IMR-90 (cell line): ENCODE measurements at regions of chr5 and their contacts with region 1.

Region 1: DNA sequence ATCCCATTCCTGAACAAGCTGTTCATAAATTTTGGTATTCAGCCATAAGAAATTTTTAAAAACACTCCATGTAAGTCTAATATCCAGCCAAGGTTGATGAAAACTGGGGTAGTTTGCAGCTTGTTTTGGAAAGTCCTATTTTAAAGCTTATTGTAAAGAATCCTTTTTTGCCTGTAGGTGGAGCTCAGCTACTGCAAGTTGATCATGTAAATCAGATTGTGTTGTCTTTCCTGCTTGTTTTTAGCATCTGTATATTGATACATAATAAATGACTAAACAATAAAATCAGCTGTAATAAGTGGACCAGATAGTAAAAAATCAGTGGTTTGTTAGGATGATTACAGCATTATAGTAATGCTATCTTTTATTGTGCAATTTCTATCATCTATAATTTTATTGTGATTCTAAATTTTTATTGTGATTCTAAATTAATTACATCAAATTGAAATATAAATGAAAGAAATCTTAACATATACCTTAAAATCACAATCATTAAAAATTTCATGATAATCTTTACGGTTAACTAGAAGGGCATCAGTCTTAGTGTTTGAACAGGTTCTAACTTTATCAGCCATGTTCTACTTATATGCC is 42.4 kb downstream of the CWC27 start:
- DNase-seq: peak; percentile 81
- ATAC-seq: peak; percentile 77
- H3K4me3 ChIP-seq: no peak overlapping the region
- H3K27ac ChIP-seq: no peak overlapping the region
- H3K4me1 ChIP-seq: no peaks in the 10 kb centered on the region
- H3K27me3 ChIP-seq: no peaks in the 10 kb centered on the region
- CTCF ChIP-seq: peak; percentile 81
- POLR2A ChIP-seq: 0 out of 2 replicates have a peak, but pooled peaks have one; percentile 30
- RAD21 ChIP-seq: peak; percentile 89

Region 2: GRCh38 chr5:64229163-64229774 is 581.9 kb before region 1 on chr5:
- CTCF ChIA-PET with region 1: no interaction called
- POLR2A ChIA-PET with region 1: no interaction called
- dilution Hi-C with region 1: no loop called
- in situ Hi-C with region 1: no loop called
- intact Hi-C with region 1: no loop called
- DNase-seq: peak; percentile 39
- ATAC-seq: peak; percentile 48; the same call in 1 of the 2 replicates
- H3K4me3 ChIP-seq: no peak overlapping the region
- H3K27ac ChIP-seq: no peak overlapping the region
- H3K4me1 ChIP-seq: no peaks in the 10 kb centered on the region
- H3K27me3 ChIP-seq: no peaks in the 10 kb centered on the region
- CTCF ChIP-seq: peak; percentile 62
- POLR2A ChIP-seq: no peak
- RAD21 ChIP-seq: peak; percentile 51

Region 3: DNA sequence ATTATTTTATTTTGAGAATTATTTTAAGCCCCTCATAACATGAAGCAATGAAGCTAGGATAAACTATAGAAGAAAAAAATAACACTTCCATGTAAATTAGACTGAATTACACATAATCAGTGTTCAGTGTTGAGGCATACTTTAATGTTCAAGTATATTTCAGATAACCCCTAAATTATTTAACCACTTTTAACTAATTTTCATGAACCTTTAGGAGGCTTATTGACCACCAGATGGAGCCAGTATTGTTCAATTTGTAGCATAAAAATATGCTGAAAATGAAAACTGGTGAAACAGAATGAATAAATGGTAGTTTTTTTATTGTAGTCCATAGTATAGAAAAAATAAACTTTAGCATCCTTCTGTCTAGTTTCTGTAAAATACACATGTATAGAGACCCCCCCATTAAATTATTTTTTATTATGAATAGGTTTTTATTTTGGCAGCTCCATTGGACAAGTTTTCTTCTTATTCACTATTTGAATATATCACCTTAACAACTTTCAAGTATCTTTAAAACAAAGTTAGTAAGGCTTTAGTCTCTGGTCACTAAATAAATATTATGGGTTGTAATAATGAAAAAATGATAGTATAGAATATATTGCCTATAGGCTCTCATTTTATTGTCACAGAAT is 147.7 kb after region 1 on chr5:
- CTCF ChIA-PET with region 1: no interaction called
- POLR2A ChIA-PET with region 1: no interaction called
- dilution Hi-C with region 1: no loop called
- in situ Hi-C with region 1: loop called (anchors 10 kb)
- intact Hi-C with region 1: loop called (anchors 1 kb)
- DNase-seq: peak; percentile 72
- ATAC-seq: no peak; the same call in 1 of the 2 replicates
- H3K4me3 ChIP-seq: no peak overlapping the region
- H3K27ac ChIP-seq: peak overlapping the region; percentile 56; the same call in 1 of the 2 replicates
- H3K4me1 ChIP-seq: peaks cover 3% of the 10 kb centered on the region; the same call in 1 of the 2 replicates
- H3K27me3 ChIP-seq: no peaks in the 10 kb centered on the region
- CTCF ChIP-seq: peak; percentile 68
- POLR2A ChIP-seq: no peak
- RAD21 ChIP-seq: peak; percentile 76

Region 4: DNA sequence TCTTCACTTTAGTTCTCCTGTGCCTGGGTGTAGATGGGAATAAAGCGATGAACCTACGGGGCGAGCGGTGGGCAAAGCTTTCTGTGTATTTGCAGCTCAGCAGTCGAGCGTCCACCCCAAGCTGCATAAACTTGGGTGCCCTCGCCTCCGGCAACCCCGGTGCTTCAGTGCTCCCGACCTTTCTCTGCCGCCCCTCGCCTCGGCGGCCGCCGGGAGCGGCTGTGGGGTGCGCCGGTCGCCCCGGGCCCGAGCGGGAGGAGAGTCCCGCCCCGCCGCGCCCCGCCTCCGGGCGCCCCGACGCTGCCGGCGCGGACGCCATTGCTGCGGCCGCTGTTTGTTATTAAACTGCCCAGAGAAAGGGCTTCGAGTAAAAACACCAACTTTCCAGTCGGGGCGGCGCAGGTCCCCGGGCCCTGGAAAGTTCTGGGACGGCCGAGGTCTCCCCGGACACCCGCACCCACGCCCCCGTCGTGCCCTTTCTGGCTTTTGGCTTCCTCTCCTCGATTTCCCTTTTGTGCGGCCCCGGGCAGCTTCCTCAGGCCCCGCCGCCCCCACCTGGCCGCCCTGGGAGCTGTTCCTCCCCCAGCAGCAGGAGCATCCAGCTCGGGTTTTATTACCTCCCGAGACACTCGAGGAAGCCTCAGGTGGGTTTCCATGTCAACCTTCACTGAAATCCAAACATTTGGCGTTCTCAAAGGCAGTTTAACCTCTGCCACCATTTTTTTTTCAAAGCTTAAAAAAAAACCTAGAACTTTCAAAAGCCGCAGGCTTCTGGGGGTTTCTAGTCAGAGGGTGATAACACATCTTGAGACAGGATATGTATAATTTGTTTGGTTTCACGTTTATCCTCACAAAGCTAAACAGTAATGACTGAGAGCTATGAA is 291.9 kb after region 1 on chr5:
- CTCF ChIA-PET with region 1: interaction called, 4 read pairs
- POLR2A ChIA-PET with region 1: no interaction called
- dilution Hi-C with region 1: no loop called
- in situ Hi-C with region 1: loop called (anchors 10 kb)
- intact Hi-C with region 1: loop called (anchors 2 kb)
- DNase-seq: peak; percentile 15
- ATAC-seq: peak; percentile 18
- H3K4me3 ChIP-seq: peak overlapping the region; percentile 21; the same call in 1 of the 2 replicates
- H3K27ac ChIP-seq: peak overlapping the region; percentile 91
- H3K4me1 ChIP-seq: peaks cover 18% of the 10 kb centered on the region
- H3K27me3 ChIP-seq: no peaks in the 10 kb centered on the region
- CTCF ChIP-seq: no peak
- POLR2A ChIP-seq: no peak
- RAD21 ChIP-seq: no peak

Region 5: DNA sequence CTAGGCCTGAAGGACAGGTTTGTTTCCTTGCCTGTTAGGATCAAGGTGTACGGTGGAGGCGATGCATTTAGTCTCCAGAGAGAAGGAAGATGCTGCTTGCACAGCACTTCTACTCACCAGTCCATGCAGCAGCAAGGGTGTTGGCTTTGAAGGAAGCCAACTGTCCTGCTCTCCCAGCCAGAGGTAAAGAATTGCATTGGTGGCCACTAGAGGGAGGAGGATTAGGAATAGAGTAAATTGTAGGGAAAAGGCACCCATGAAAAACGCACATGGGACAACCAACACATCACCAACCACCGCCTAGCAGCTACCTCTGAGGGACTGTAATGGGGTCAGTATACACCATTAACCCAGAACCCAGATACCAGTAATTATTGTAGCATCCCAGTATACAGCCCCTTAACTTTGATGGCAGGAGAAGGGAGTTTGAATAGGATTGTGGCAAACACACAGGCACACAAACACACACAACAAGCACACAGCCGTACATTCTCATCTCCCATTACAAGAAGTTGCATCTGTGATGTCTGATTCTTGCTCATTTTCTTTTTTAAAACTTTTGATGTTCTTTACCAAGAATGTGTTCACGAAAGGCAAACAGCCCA is 402.9 kb after region 1 on chr5:
- CTCF ChIA-PET with region 1: no interaction called
- POLR2A ChIA-PET with region 1: no interaction called
- dilution Hi-C with region 1: no loop called
- in situ Hi-C with region 1: no loop called
- intact Hi-C with region 1: loop called (anchors 1 kb)
- DNase-seq: peak; percentile 39
- ATAC-seq: peak; percentile 50
- H3K4me3 ChIP-seq: no peak overlapping the region
- H3K27ac ChIP-seq: no peak overlapping the region
- H3K4me1 ChIP-seq: peaks cover 3% of the 10 kb centered on the region
- H3K27me3 ChIP-seq: no peaks in the 10 kb centered on the region
- CTCF ChIP-seq: peak; percentile 41
- POLR2A ChIP-seq: no peak
- RAD21 ChIP-seq: peak; percentile 29; the same call in 1 of the 2 replicates

Region 6: DNA sequence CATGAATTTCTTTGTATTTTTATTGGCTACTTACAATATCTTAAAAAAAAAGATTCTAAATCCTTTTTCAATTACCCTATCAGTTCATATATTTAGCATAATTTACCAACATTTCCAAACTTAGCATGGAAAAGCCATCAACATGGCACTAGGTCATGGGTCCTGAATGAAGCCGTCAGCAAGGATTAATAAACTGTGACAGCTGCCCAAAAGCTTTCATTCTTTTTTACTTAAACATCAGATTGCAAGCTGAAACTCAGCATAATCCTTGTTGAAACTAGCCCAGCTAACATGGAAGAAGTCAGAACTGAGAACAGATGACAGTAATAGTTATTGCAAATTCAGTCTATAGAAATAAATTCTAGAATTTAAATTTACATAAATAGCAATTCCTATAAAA is 460.8 kb after region 1 on chr5:
- CTCF ChIA-PET with region 1: no interaction called
- POLR2A ChIA-PET with region 1: no interaction called
- dilution Hi-C with region 1: no loop called
- in situ Hi-C with region 1: no loop called
- intact Hi-C with region 1: loop called (anchors 10 kb)
- DNase-seq: no peak
- ATAC-seq: no peak
- H3K4me3 ChIP-seq: no peak overlapping the region
- H3K27ac ChIP-seq: no peak overlapping the region
- H3K4me1 ChIP-seq: no peaks in the 10 kb centered on the region
- H3K27me3 ChIP-seq: no peaks in the 10 kb centered on the region
- CTCF ChIP-seq: no peak
- POLR2A ChIP-seq: no peak
- RAD21 ChIP-seq: no peak

Region 7: GRCh38 chr5:65577141-65577540 is 766.0 kb after region 1 on chr5:
- CTCF ChIA-PET with region 1: no interaction called
- POLR2A ChIA-PET with region 1: no interaction called
- dilution Hi-C with region 1: no loop called
- in situ Hi-C with region 1: no loop called
- intact Hi-C with region 1: loop called (anchors 10 kb)
- DNase-seq: peak; percentile 45
- ATAC-seq: peak; percentile 66
- H3K4me3 ChIP-seq: no peak overlapping the region
- H3K27ac ChIP-seq: no peak overlapping the region
- H3K4me1 ChIP-seq: no peaks in the 10 kb centered on the region
- H3K27me3 ChIP-seq: no peaks in the 10 kb centered on the region
- CTCF ChIP-seq: no peak
- POLR2A ChIP-seq: no peak
- RAD21 ChIP-seq: no peak